T-cell (primary cell): ENCODE measurements at regions of chr3 and their contacts with region 1.

Region 1: DNA sequence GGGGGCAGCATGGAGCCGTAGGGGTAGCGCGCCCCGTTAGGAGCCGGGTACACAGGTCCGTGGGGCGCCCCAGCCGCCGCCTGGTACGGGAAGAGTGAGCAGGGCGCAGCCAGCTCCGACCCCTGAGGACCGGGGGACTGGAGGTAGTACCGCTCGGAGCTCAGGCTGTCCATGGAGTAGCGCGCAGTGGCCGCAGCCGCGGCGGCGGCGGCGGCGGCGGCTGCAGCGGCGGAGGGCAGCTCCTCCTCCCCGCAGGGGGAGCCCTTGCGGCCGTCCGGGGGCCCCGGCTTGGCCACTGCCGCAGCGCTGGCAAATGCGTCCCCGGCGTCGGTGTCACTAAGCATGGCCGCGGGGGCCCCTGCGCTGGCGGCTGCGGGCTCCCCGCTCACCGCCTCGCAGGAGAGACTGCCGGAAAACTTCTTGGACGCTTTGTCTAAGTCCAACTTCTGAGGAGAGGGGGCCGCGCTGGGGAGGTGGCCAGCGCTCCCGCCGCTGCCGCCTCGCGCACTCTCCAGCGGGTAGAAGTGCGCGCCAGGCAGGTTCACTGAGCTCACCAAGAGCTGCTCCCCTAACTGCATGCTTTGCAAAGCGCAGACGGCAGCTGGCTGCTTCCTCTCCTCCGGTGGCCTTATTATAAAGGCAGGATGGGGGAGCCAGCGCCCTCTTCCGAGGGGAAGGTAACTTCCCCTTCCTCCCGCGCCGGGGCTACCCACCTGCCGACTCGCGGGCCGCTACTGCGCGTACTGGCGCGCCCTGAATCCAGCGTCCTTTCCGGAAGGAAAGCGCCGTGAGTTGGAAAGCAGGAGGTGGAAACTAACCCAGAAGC is at the start of gene EOMES:
- DNase-seq: peak; percentile 57 to 87 (median 69)
- ATAC-seq: peak; percentile 81 to 84 (median 83)
- H3K4me3 ChIP-seq: peak within 1 kb of the TSS; percentile 74 to 93
- H3K4me3 Mint-ChIP-seq: peak within 1 kb of the TSS; percentile 84 to 89 (median 87)
- H3K27ac ChIP-seq: peak within 1 kb of the TSS; percentile 48
- H3K27ac Mint-ChIP-seq: peak within 1 kb of the TSS; percentile 34 to 66
- H3K4me1 ChIP-seq: peaks cover 16 to 45% of the 10 kb centered on the region in 2 experiments
- H3K4me1 Mint-ChIP-seq: peaks cover 33 to 40% (median 38%) of the 10 kb centered on the region in 3 donors
- H3K27me3 ChIP-seq: peaks cover 24 to 49% of the 10 kb centered on the region in 2 experiments
- H3K27me3 Mint-ChIP-seq: peaks cover 42 to 68% of the 10 kb centered on the region in 2 donors
- total RNA-seq, gene EOMES: 6.2 to 22.8 (median 14.4) TPM

Region 2: DNA sequence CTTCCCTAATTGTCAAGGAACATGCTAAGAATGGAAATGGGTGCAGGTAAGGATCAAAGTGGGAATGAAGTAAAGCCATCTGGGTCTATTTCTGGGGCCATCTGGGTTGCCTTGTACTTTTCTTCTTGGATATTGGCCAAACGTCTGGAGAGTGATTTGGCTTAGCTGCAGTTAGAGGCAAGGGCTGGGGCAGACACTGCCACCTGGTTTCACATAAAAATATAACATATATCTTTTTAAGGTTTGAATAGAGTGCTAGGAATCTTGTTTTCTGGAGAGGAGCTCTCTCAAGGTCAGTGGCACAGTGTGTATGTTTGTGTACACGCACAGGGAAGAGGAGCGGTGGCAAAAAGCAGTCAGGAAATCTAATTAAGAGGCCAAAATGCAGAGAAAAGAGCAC is 24.9 kb after region 1 on chr3:
- CTCF ChIA-PET with region 1: interaction called in 1 of 2 experiments, 11 read pairs
- POLR2A ChIA-PET with region 1: no interaction called
- DNase-seq: no peak
- ATAC-seq: no peak
- H3K4me3 ChIP-seq: no peak overlapping the region
- H3K4me3 Mint-ChIP-seq: no peak overlapping the region
- H3K27ac ChIP-seq: no peak overlapping the region
- H3K27ac Mint-ChIP-seq: no peak overlapping the region
- H3K4me1 ChIP-seq: no peaks in the 10 kb centered on the region
- H3K4me1 Mint-ChIP-seq: peaks cover 7 to 16% (median 7%) of the 10 kb centered on the region in 3 donors
- H3K27me3 ChIP-seq: no peaks in the 10 kb centered on the region
- H3K27me3 Mint-ChIP-seq: peaks cover 0 to 6% of the 10 kb centered on the region in 2 donors

Region 3: GRCh38 chr3:28109829-28110228 is 387.9 kb after region 1 on chr3:
- CTCF ChIA-PET with region 1: interaction called in 1 of 2 experiments, 10 read pairs
- POLR2A ChIA-PET with region 1: no interaction called
- DNase-seq: no peak
- ATAC-seq: no peak
- H3K4me3 ChIP-seq: no peak overlapping the region
- H3K4me3 Mint-ChIP-seq: no peak overlapping the region
- H3K27ac ChIP-seq: no peak overlapping the region
- H3K27ac Mint-ChIP-seq: no peak overlapping the region
- H3K4me1 ChIP-seq: no peaks in the 10 kb centered on the region
- H3K4me1 Mint-ChIP-seq: no peaks in the 10 kb centered on the region
- H3K27me3 ChIP-seq: no peaks in the 10 kb centered on the region
- H3K27me3 Mint-ChIP-seq: peaks cover under 1% of the 10 kb centered on the region in 2 donors

Region 4: GRCh38 chr3:28286595-28286994 is 564.7 kb after region 1 on chr3:
- CTCF ChIA-PET with region 1: interaction called, 3 to 32 read pairs
- POLR2A ChIA-PET with region 1: interaction called in 1 of 2 experiments, 5 read pairs
- DNase-seq: peak in 1 of 35 experiments; percentile 62
- ATAC-seq: peak; percentile 50 to 84 (median 78)
- H3K4me3 ChIP-seq: no peak overlapping the region
- H3K4me3 Mint-ChIP-seq: no peak overlapping the region
- H3K27ac ChIP-seq: no peak overlapping the region
- H3K27ac Mint-ChIP-seq: no peak overlapping the region
- H3K4me1 ChIP-seq: no peaks in the 10 kb centered on the region
- H3K4me1 Mint-ChIP-seq: peaks cover 13 to 21% (median 18%) of the 10 kb centered on the region in 3 donors
- H3K27me3 ChIP-seq: no peaks in the 10 kb centered on the region
- H3K27me3 Mint-ChIP-seq: no peaks in the 10 kb centered on the region